ENCODE measurements at regions of chr10 and their contacts with region 1.

Region 1: GRCh38 chr10:73886085-73886529 is 11.8 kb upstream of the CAMK2G start:
- DNase-seq: peak; percentile 68
- H3K4me3 ChIP-seq: no peak overlapping the region
- H3K27ac ChIP-seq: peak overlapping the region; percentile 98
- H3K4me1 ChIP-seq: peaks cover 38% of the 10 kb centered on the region
- H3K27me3 ChIP-seq: no peaks in the 10 kb centered on the region
- CTCF ChIP-seq: peak; percentile 87 to 88

Region 2: GRCh38 chr10:73017955-73018480 is 868.1 kb before region 1 on chr10:
- CTCF ChIA-PET with region 1: no interaction called
- dilution Hi-C with region 1: no loop called
- in situ Hi-C with region 1: no loop called
- intact Hi-C with region 1: no loop called
- DNase-seq: no peak
- H3K4me3 ChIP-seq: no peak overlapping the region
- H3K27ac ChIP-seq: no peak overlapping the region
- H3K4me1 ChIP-seq: no peaks in the 10 kb centered on the region
- H3K27me3 ChIP-seq: no peaks in the 10 kb centered on the region
- CTCF ChIP-seq: no peak

Region 3: GRCh38 chr10:73850863-73851461 is 35.1 kb before region 1 on chr10:
- CTCF ChIA-PET with region 1: no interaction called
- dilution Hi-C with region 1: no loop called
- in situ Hi-C with region 1: no loop called
- intact Hi-C with region 1: no loop called
- DNase-seq: no peak
- H3K4me3 ChIP-seq: no peak overlapping the region
- H3K27ac ChIP-seq: no peak overlapping the region
- H3K4me1 ChIP-seq: no peaks in the 10 kb centered on the region
- H3K27me3 ChIP-seq: no peaks in the 10 kb centered on the region
- CTCF ChIP-seq: no peak

Region 4: DNA sequence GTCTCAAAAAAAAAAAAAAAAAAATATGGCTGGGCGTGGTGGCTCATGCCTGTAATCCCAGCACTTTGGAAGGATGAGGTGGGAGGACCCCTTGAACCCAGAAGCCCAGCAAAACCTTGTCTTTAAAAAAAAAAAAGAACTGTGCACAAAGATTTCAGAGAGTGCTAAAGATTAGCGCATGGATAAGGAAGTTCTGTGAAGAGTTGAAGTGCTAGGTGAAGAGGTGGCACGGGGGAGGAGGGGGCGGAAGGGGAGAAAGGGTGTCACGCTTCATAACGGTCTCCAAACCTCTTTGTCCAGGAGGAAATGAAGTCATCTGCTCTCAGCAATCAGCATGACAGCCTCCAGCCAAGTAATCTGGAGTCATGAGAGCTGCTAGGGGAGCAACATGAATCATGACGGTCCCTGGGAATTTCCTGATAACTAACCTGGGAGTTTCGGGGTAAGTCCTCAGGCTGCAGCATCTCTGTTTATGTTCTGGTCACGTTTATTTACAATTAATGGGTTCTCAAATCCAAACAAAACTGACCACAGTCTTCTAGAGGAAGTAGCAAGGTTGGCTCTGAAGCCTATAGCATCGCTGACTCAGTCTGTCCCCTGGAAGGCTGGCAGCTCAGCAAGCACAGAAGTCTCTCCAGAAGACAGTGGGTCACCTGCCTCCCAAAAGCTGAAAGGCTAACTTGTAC is 22.9 kb after region 1 on chr10:
- CTCF ChIA-PET with region 1: interaction called, 4 read pairs
- dilution Hi-C with region 1: no loop called
- in situ Hi-C with region 1: no loop called
- intact Hi-C with region 1: loop called (anchors 1 kb)
- DNase-seq: peak; percentile 100
- H3K4me3 ChIP-seq: no peak overlapping the region
- H3K27ac ChIP-seq: peak overlapping the region; percentile 90
- H3K4me1 ChIP-seq: peaks cover 67% of the 10 kb centered on the region
- H3K27me3 ChIP-seq: no peaks in the 10 kb centered on the region
- CTCF ChIP-seq: no peak

Region 5: GRCh38 chr10:73931767-73932619 is 45.9 kb after region 1 on chr10:
- CTCF ChIA-PET with region 1: no interaction called
- dilution Hi-C with region 1: no loop called
- in situ Hi-C with region 1: loop called (anchors 5 kb)
- intact Hi-C with region 1: loop called (anchors 2 kb)
- DNase-seq: peak; percentile 100
- H3K4me3 ChIP-seq: no peak overlapping the region
- H3K27ac ChIP-seq: peak overlapping the region; percentile 91
- H3K4me1 ChIP-seq: peaks cover 19% of the 10 kb centered on the region
- H3K27me3 ChIP-seq: no peaks in the 10 kb centered on the region
- CTCF ChIP-seq: no peak

Region 6: DNA sequence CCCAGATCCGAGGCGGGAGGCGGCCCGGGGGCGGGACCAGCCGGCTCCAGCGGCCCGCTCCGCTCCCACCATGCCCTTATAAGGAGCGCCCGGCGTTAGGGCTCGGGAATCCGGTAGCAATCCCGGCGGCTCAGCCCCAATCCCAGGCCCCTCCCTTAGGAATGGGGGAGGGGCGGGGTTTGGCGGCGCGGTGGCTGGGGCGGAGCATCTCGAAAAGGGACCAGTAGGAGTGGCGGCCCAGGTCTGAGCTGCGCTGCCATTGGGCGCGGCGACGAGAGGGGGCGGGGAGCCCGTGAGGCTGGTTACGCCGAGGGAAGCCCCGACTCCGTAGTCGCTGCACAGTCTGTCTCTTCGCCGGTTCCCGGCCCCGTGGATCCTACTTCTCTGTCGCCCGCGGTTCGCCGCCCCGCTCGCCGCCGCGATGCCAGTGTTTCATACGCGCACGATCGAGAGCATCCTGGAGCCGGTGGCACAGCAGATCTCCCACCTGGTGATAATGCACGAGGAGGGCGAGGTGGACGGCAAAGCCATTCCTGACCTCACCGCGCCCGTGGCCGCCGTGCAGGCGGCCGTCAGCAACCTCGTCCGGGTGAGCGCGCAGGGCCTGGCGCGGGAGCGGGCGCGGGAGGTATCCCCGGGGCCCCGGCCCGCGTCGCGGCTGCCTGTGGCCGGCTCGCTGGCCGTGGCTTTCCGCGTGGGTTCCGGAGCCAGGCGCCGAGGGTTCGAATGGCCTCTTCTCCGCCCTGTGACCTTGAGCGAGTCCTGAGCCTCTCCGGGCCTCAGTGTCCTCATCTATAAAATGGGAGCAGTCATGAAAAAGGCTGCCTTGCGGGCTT is 111.9 kb after region 1 on chr10 and contains the start of gene VCL:
- CTCF ChIA-PET with region 1: no interaction called
- dilution Hi-C with region 1: no loop called
- in situ Hi-C with region 1: no loop called
- intact Hi-C with region 1: loop called (anchors 1 kb)
- DNase-seq: peak; percentile 99
- H3K4me3 ChIP-seq: peak within 1 kb of the TSS; percentile 61 to 92 (median 90)
- H3K27ac ChIP-seq: peak within 1 kb of the TSS; percentile 72
- H3K4me1 ChIP-seq: peaks cover 26% of the 10 kb centered on the region
- H3K27me3 ChIP-seq: no peaks in the 10 kb centered on the region
- CTCF ChIP-seq: no peak
- total RNA-seq, gene VCL: 136 to 172 TPM

Region 7: GRCh38 chr10:74058658-74059057 is 172.6 kb after region 1 on chr10:
- CTCF ChIA-PET with region 1: interaction called, 10 read pairs
- dilution Hi-C with region 1: no loop called
- in situ Hi-C with region 1: no loop called
- intact Hi-C with region 1: no loop called
- DNase-seq: no peak
- H3K4me3 ChIP-seq: no peak overlapping the region
- H3K27ac ChIP-seq: no peak overlapping the region
- H3K4me1 ChIP-seq: peaks cover 33% of the 10 kb centered on the region
- H3K27me3 ChIP-seq: no peaks in the 10 kb centered on the region
- CTCF ChIP-seq: no peak

Region 8: GRCh38 chr10:74103560-74104248 is 217.6 kb after region 1 on chr10:
- CTCF ChIA-PET with region 1: no interaction called
- dilution Hi-C with region 1: no loop called
- in situ Hi-C with region 1: loop called in 1 of 2 experiments (anchors 25 kb)
- intact Hi-C with region 1: loop called (anchors 5 kb)
- DNase-seq: no peak
- H3K4me3 ChIP-seq: no peak overlapping the region
- H3K27ac ChIP-seq: no peak overlapping the region
- H3K4me1 ChIP-seq: peaks cover 17% of the 10 kb centered on the region
- H3K27me3 ChIP-seq: no peaks in the 10 kb centered on the region
- CTCF ChIP-seq: peak; percentile 21 to 45

Region 9: GRCh38 chr10:75235375-75236177 is 1349.5 kb after region 1 on chr10 and contains the start of gene COMTD1:
- CTCF ChIA-PET with region 1: interaction called, 5 read pairs
- dilution Hi-C with region 1: no loop called
- in situ Hi-C with region 1: no loop called
- intact Hi-C with region 1: loop called (anchors 5 kb)
- DNase-seq: peak; percentile 89
- H3K4me3 ChIP-seq: peak within 1 kb of the TSS; percentile 67 to 81 (median 81)
- H3K27ac ChIP-seq: peak within 1 kb of the TSS; percentile 60
- H3K4me1 ChIP-seq: peaks cover 26% of the 10 kb centered on the region
- H3K27me3 ChIP-seq: no peaks in the 10 kb centered on the region
- CTCF ChIP-seq: peak; percentile 100
- total RNA-seq, gene COMTD1: 20.0 to 26.3 TPM

Region 10: GRCh38 chr10:75431180-75432111 is 1545.3 kb after region 1 on chr10 and contains the start of gene LRMDA:
- CTCF ChIA-PET with region 1: no interaction called
- dilution Hi-C with region 1: no loop called
- in situ Hi-C with region 1: no loop called
- intact Hi-C with region 1: no loop called
- DNase-seq: no peak
- H3K4me3 ChIP-seq: peak within 1 kb of the TSS in 2 of 3 experiments; percentile 19 to 25
- H3K27ac ChIP-seq: no peak within 1 kb of the TSS
- H3K4me1 ChIP-seq: peaks cover 45% of the 10 kb centered on the region
- H3K27me3 ChIP-seq: no peaks in the 10 kb centered on the region
- CTCF ChIP-seq: no peak
- total RNA-seq, gene LRMDA: 0.67 TPM in 1 of 2 donors, not detected in the other